A549 (cell line): ENCODE measurements at regions of chr5 and their contacts with region 1.

Region 1: GRCh38 chr5:140244525-140245025 is 58.3 kb downstream of the PFDN1 start:
- DNase-seq: peak; percentile 69 to 87
- ATAC-seq: peak; percentile 62 to 82
- H3K4me3 ChIP-seq: no peak overlapping the region
- H3K27ac ChIP-seq: no peak overlapping the region
- H3K4me1 ChIP-seq: peaks cover 29% of the 10 kb centered on the region
- CTCF ChIP-seq: peak; percentile 88
- EP300 ChIP-seq: no peak
- POLR2A ChIP-seq: no peak
- RAD21 ChIP-seq: peak; percentile 95 to 97

Region 2: DNA sequence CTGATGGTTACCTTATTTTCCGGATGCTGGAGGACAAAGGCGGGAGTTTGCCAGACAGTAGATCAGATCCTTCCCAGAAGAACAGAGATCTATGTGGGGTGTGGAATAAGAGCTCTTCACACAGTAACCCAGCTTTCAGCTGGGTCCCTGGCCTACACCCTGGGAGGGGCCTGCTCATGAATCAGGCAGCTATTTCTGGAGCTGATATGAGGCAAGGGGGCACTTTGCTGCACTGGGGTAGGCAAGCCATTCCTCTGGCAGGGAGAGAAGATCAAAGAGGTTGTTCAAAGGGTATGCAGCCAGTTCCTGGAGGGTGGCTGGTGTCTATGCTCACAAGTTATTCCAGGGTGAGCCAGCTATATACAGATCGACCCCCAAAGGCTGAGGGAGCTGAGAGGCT is 21.0 kb before region 1 on chr5:
- CTCF ChIA-PET with region 1: interaction called, 14 read pairs
- POLR2A ChIA-PET with region 1: no interaction called
- DNase-seq: no peak
- ATAC-seq: no peak
- H3K4me3 ChIP-seq: no peak overlapping the region
- H3K27ac ChIP-seq: no peak overlapping the region
- H3K4me1 ChIP-seq: peaks cover 48% of the 10 kb centered on the region
- CTCF ChIP-seq: no peak
- EP300 ChIP-seq: no peak
- POLR2A ChIP-seq: no peak
- RAD21 ChIP-seq: no peak

Region 3: GRCh38 chr5:140287801-140288521 is 43.4 kb after region 1 on chr5:
- CTCF ChIA-PET with region 1: interaction called, 14 read pairs
- POLR2A ChIA-PET with region 1: interaction called, 4 read pairs
- DNase-seq: no peak
- ATAC-seq: no peak
- H3K4me3 ChIP-seq: no peak overlapping the region
- H3K27ac ChIP-seq: no peak overlapping the region
- H3K4me1 ChIP-seq: peaks cover 28% of the 10 kb centered on the region
- CTCF ChIP-seq: no peak
- EP300 ChIP-seq: no peak
- POLR2A ChIP-seq: no peak
- RAD21 ChIP-seq: no peak

Region 4: DNA sequence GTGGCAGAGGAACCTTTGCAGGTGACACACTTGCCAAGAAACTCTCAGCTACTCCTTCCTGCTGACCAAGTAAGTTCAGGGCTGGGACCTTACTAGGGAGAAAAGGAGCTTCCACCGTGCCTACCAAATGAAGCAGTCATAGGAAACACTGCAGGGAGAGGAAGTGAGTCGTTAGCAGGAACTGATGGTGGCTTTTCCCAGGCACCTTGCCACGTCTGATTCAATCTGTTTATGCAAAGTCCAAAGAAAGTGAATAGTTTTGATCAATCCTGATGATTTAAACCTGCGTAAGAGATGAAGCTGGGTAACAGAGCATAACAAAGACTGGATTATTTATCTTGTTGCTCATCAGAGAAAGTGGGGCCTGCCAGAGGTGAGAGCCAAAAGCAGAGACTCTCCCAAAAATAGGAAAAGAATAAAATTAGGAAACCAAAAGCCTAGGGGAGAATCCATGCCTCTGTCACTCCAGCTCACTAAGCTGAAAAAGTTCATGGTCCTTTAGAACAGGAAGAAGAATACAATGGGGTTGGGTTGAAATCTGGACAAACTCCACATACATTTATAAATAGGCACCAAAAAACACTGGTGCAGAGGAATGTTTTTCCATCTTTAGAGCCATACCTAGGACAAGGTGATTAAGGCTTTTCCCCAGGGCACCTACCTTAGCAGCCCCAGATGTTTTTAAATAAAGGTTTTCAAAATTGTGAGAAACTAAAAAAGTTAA is 67.7 kb after region 1 on chr5:
- CTCF ChIA-PET with region 1: interaction called, 10 read pairs
- POLR2A ChIA-PET with region 1: no interaction called
- DNase-seq: peak in 1 of 2 experiments; percentile 26
- ATAC-seq: peak in 1 of 2 experiments; percentile 62; a peak in 3 of 6 replicates
- H3K4me3 ChIP-seq: no peak overlapping the region
- H3K27ac ChIP-seq: peak overlapping the region; percentile 4 to 68; a peak in 3 of 6 replicates
- H3K4me1 ChIP-seq: peaks cover 25% of the 10 kb centered on the region
- CTCF ChIP-seq: no peak
- EP300 ChIP-seq: no peak
- POLR2A ChIP-seq: no peak
- RAD21 ChIP-seq: no peak

Region 5: DNA sequence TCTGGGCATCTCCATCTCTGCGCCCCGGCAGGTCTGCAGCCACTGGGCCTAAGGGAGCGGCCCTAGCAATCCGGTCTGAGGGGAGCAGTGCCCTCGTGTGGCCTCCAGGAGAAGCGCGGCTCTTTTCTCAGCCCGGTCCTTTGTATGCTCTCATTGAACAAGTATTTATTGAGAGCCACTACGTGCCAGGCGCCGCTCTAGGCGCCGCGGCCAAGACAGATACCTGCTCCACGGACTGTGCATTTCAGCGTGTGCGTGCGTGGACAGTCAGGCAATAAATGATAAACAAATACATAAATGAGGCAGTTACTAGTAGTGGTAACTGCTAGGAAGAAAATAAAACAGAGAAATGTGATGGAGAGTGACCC is 113.1 kb after region 1 on chr5:
- CTCF ChIA-PET with region 1: interaction called, 1,613 read pairs
- POLR2A ChIA-PET with region 1: interaction called, 4 read pairs
- DNase-seq: peak; percentile 89 to 93
- ATAC-seq: peak; percentile 83 to 96
- H3K4me3 ChIP-seq: no peak overlapping the region
- H3K27ac ChIP-seq: peak overlapping the region; percentile 47 to 66; a peak in 5 of 6 replicates
- H3K4me1 ChIP-seq: peaks cover 5% of the 10 kb centered on the region; the same call in 1 of the 3 replicates
- CTCF ChIP-seq: peak; percentile 89
- EP300 ChIP-seq: no peak
- POLR2A ChIP-seq: no peak
- RAD21 ChIP-seq: peak; percentile 81 to 82